ENCODE measurements at regions of chr20 and their contacts with region 1.

Region 1: DNA sequence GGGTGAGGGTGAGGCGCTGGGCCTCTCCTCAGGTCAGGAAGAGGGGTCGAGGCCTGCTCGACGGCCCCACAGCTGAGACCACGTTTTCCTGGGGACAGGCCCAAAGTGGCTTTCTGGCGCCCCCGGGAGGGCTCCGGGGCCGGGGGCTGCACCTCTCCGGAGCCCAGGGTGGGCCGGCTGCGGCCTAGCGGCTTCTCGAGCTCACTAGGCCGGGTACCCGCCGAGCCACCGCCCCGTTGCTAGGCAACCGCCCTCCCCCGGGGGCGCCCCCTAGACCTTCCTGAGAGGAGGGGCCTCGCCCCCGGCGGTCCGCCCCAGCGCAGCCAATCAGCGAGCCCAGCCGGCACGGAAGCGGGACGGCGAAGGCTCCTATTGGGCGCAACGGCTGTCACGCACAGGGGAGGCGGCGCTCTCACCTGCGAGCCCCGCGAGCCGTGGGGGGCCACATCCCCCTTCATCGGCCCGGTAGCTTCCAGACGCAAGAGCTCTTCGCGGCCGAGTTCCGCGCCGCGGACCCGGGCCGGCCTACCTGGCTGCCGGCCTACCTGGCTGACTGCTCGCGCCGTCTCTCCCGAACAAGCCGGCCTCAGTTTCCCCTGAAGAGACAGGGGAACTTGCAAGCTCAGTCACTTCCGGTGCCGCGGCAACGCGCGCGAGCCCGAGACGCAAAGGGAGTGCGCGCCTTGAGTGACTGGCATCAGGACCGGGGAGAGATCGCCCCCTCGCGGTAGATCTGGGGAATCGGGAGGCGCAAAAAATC is 831 bp upstream of the BCL2L1 start:
- DNase-seq: peak; percentile 97
- H3K4me3 Mint-ChIP-seq: peak overlapping the region; percentile 95
- H3K27ac Mint-ChIP-seq: peak overlapping the region; percentile 97
- H3K4me1 Mint-ChIP-seq: peaks cover 31% of the 10 kb centered on the region
- H3K27me3 Mint-ChIP-seq: no peaks in the 10 kb centered on the region

Region 2: GRCh38 chr20:31566658-31567379 is 156.7 kb before region 1 on chr20:
- CTCF ChIA-PET with region 1: interaction called, 24 read pairs
- POLR2A ChIA-PET with region 1: interaction called, 3 read pairs
- DNase-seq: no peak
- H3K4me3 Mint-ChIP-seq: no peak overlapping the region
- H3K27ac Mint-ChIP-seq: peak overlapping the region; percentile 52
- H3K4me1 Mint-ChIP-seq: peaks cover 15% of the 10 kb centered on the region
- H3K27me3 Mint-ChIP-seq: no peaks in the 10 kb centered on the region

Region 3: DNA sequence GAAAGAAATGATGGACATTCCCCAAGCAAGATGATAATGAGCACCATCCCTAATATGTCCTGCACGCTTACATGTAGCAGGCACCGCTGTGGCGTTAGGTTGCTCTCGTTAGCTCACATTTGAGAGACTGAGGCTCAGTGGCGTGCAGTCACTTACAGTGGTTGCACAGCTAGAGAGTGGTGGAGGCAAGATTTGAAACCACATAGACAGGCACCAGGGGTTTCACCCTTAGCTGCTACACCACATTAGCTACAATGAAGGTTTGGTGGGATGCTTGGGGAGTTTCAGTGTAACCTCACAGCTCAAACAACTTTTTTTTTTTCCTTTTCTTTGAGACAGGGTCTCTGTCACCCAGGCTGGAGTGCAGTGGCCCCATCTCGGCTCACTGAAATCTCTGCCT is 82.1 kb before region 1 on chr20:
- CTCF ChIA-PET with region 1: interaction called, 116 read pairs
- POLR2A ChIA-PET with region 1: no interaction called
- DNase-seq: no peak
- H3K4me3 Mint-ChIP-seq: no peak overlapping the region
- H3K27ac Mint-ChIP-seq: no peak overlapping the region
- H3K4me1 Mint-ChIP-seq: peaks cover 7% of the 10 kb centered on the region
- H3K27me3 Mint-ChIP-seq: peaks cover 24% of the 10 kb centered on the region

Region 4: GRCh38 chr20:31674895-31675827 is 48.3 kb before region 1 on chr20:
- CTCF ChIA-PET with region 1: interaction called, 109 read pairs
- POLR2A ChIA-PET with region 1: interaction called, 206 read pairs
- DNase-seq: peak; percentile 84
- H3K4me3 Mint-ChIP-seq: peak overlapping the region; percentile 76
- H3K27ac Mint-ChIP-seq: peak overlapping the region; percentile 93
- H3K4me1 Mint-ChIP-seq: peaks cover 86% of the 10 kb centered on the region
- H3K27me3 Mint-ChIP-seq: no peaks in the 10 kb centered on the region

Region 5: GRCh38 chr20:31704225-31705119 is 19.0 kb before region 1 on chr20:
- CTCF ChIA-PET with region 1: interaction called, 55 read pairs
- POLR2A ChIA-PET with region 1: interaction called, 36 read pairs
- DNase-seq: no peak
- H3K4me3 Mint-ChIP-seq: no peak overlapping the region
- H3K27ac Mint-ChIP-seq: no peak overlapping the region
- H3K4me1 Mint-ChIP-seq: peaks cover 69% of the 10 kb centered on the region
- H3K27me3 Mint-ChIP-seq: no peaks in the 10 kb centered on the region

Region 6: GRCh38 chr20:31833130-31833930 is 109.8 kb after region 1 on chr20:
- CTCF ChIA-PET with region 1: no interaction called
- POLR2A ChIA-PET with region 1: no interaction called
- DNase-seq: peak; percentile 65
- H3K4me3 Mint-ChIP-seq: no peak overlapping the region
- H3K27ac Mint-ChIP-seq: no peak overlapping the region
- H3K4me1 Mint-ChIP-seq: peaks cover 26% of the 10 kb centered on the region
- H3K27me3 Mint-ChIP-seq: no peaks in the 10 kb centered on the region